WTC11 (cell line): ENCODE measurements at regions of chr11 and their contacts with region 1.

Region 1: GRCh38 chr11:64204464-64204989 is 2.0 kb upstream of the FERMT3 start:
- DNase-seq: peak; percentile 82
- ATAC-seq: peak; percentile 88
- H3K4me3 Mint-ChIP-seq: no peak overlapping the region
- H3K27ac Mint-ChIP-seq: peak overlapping the region; percentile 88
- H3K4me1 Mint-ChIP-seq: peaks cover 6% of the 10 kb centered on the region
- H3K27me3 Mint-ChIP-seq: no peaks in the 10 kb centered on the region
- CTCF ChIP-seq: peak; percentile 31; the same call in 1 of the 2 replicates

Region 2: DNA sequence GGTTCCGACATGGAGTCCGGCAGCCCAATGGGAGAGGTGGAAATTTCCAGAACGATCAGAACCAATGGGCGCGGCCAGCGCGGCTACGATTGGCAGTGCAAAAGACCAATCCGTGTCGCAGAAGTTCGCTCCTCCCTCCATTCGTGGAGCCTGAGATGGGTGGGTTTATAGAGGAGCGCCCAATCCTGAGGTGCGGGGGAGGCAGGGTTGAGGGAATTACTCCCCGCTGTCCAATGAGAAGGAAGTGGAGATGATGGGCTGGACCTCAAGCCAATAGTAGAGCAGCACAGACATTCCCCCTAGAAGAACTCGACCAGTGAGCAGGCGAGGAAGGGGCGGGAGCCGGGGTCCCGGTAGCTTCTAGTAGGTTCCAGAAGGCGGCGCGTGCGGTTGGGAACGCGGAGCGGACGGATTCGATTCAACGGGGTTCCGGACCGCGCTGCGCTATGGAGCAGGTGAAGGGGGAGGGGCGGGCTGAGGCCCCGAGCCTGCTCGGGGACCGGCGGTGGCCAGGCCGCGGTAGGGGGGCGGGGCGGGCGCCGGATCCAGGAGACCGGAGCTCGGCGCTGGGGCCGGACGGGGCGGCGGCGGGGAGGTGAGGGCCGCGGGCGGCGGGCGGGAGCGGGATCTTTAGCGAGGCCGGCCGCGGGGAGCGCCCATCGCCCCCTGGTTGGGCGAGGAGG is 18.6 kb before region 1 on chr11 and contains the start of gene STIP1:
- CTCF ChIA-PET with region 1: interaction called, 23 read pairs
- POLR2A ChIA-PET with region 1: interaction called, 3 read pairs
- DNase-seq: peak; percentile 98
- ATAC-seq: peak; percentile 92
- H3K4me3 Mint-ChIP-seq: peak within 1 kb of the TSS; percentile 93
- H3K27ac Mint-ChIP-seq: peak within 1 kb of the TSS; percentile 96
- H3K4me1 Mint-ChIP-seq: peaks cover 37% of the 10 kb centered on the region
- H3K27me3 Mint-ChIP-seq: no peaks in the 10 kb centered on the region
- CTCF ChIP-seq: no peak
- total RNA-seq, gene STIP1: 291 to 296 TPM (median 296 TPM) in 3 replicates

Region 3: GRCh38 chr11:64216879-64217278 is 12.4 kb after region 1 on chr11:
- CTCF ChIA-PET with region 1: interaction called, 21 read pairs
- POLR2A ChIA-PET with region 1: interaction called, 4 read pairs
- DNase-seq: no peak
- ATAC-seq: peak; percentile 29; the same call in 1 of the 2 replicates
- H3K4me3 Mint-ChIP-seq: no peak overlapping the region
- H3K27ac Mint-ChIP-seq: no peak overlapping the region
- H3K4me1 Mint-ChIP-seq: no peaks in the 10 kb centered on the region
- H3K27me3 Mint-ChIP-seq: no peaks in the 10 kb centered on the region
- CTCF ChIP-seq: no peak

Region 4: GRCh38 chr11:64233913-64234834 is 29.6 kb after region 1 on chr11 and contains the start of gene VEGFB:
- CTCF ChIA-PET with region 1: interaction called, 12 read pairs
- POLR2A ChIA-PET with region 1: interaction called, 5 read pairs
- DNase-seq: peak; percentile 61
- ATAC-seq: peak; percentile 17; the same call in 1 of the 2 replicates
- H3K4me3 Mint-ChIP-seq: peak within 1 kb of the TSS; percentile 85
- H3K27ac Mint-ChIP-seq: peak within 1 kb of the TSS; percentile 15; the same call in 1 of the 2 replicates
- H3K4me1 Mint-ChIP-seq: peaks cover 30% of the 10 kb centered on the region
- H3K27me3 Mint-ChIP-seq: peaks cover 16% of the 10 kb centered on the region
- CTCF ChIP-seq: no peak
- total RNA-seq, gene VEGFB: 51.7 to 62.2 TPM (median 59.7 TPM) in 3 replicates

Region 5: GRCh38 chr11:64317957-64318693 is 113.6 kb after region 1 on chr11 and contains the start of gene PRDX5:
- CTCF ChIA-PET with region 1: interaction called, 13 read pairs
- POLR2A ChIA-PET with region 1: no interaction called
- DNase-seq: peak; percentile 90
- ATAC-seq: peak; percentile 71
- H3K4me3 Mint-ChIP-seq: peak within 1 kb of the TSS; percentile 90
- H3K27ac Mint-ChIP-seq: peak within 1 kb of the TSS; percentile 99
- H3K4me1 Mint-ChIP-seq: peaks cover 17% of the 10 kb centered on the region
- H3K27me3 Mint-ChIP-seq: no peaks in the 10 kb centered on the region
- CTCF ChIP-seq: no peak
- total RNA-seq, gene PRDX5: 255 to 293 TPM (median 282 TPM) in 3 replicates